CD4-positive, alpha-beta memory T cell (primary cell): ENCODE measurements at regions of chr11 and their contacts with region 1.

Region 1: DNA sequence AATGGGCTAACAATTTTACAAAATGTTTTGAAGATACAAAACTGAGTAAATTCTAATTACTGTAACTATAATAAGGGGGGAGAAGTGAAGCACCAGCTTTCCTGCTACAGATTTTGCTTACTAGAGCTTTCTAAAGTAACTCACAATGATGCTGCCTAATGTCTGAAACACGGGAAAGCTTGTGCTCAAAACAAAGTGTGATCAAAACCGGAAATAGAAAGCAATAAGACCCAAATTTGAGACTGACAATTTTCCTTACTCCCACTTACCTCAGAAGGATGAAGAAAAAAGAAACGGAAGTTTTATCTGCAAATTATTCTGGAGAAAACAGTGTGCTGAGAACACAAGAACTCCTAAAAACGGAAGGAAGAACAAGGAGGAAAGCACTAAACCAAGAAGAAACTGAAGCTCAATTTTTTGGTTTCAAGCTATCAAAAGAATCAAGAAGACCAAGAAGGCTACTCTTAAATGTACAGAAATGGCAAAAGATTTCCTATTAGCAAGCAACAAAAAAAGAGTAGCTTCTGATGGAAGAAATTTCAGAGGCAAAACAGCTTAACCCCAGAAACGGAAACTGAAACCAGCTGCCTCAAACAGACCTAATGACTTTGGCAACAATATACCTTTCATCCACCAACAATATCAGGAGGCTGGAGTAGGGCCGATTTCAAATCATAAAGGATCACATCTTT is 33.4 kb downstream of the AMBRA1 start:
- DNase-seq: peak; percentile 30 to 50 (median 39)
- H3K4me3 ChIP-seq: peak overlapping the region; percentile 67 to 89
- H3K4me3 Mint-ChIP-seq: peak overlapping the region; percentile 78 to 96 (median 92)
- H3K27ac ChIP-seq: peak overlapping the region; percentile 77
- H3K27ac Mint-ChIP-seq: peak overlapping the region; percentile 90 to 99 (median 97)
- H3K4me1 ChIP-seq: peaks cover 59% of the 10 kb centered on the region
- H3K4me1 Mint-ChIP-seq: peaks cover 32 to 80% (median 55%) of the 10 kb centered on the region in 4 donors
- H3K27me3 ChIP-seq: no peaks in the 10 kb centered on the region
- H3K27me3 Mint-ChIP-seq: no peaks in the 10 kb centered on the region

Region 2: GRCh38 chr11:46570790-46571398 is 10.4 kb after region 1 on chr11:
- CTCF ChIA-PET with region 1: interaction called, 4 read pairs
- POLR2A ChIA-PET with region 1: interaction called, 14 read pairs
- intact Hi-C with region 1: no loop called
- DNase-seq: no peak
- H3K4me3 ChIP-seq: no peak overlapping the region
- H3K4me3 Mint-ChIP-seq: no peak overlapping the region
- H3K27ac ChIP-seq: no peak overlapping the region
- H3K27ac Mint-ChIP-seq: peak overlapping the region in 3 of 7 donors; percentile 15 to 23 (median 15)
- H3K4me1 ChIP-seq: peaks cover 9% of the 10 kb centered on the region
- H3K4me1 Mint-ChIP-seq: peaks cover 20 to 31% (median 23%) of the 10 kb centered on the region in 4 donors
- H3K27me3 ChIP-seq: no peaks in the 10 kb centered on the region
- H3K27me3 Mint-ChIP-seq: no peaks in the 10 kb centered on the region

Region 3: GRCh38 chr11:46593550-46594373 is 33.3 kb after region 1 on chr11 and contains the start of gene AMBRA1:
- CTCF ChIA-PET with region 1: interaction called, 3 read pairs
- POLR2A ChIA-PET with region 1: interaction called, 16 read pairs
- intact Hi-C with region 1: loop called (anchors 2 kb)
- DNase-seq: peak; percentile 79 to 86 (median 81)
- H3K4me3 ChIP-seq: peak within 1 kb of the TSS; percentile 78 to 99
- H3K4me3 Mint-ChIP-seq: peak within 1 kb of the TSS; percentile 94 to 99 (median 98)
- H3K27ac ChIP-seq: peak within 1 kb of the TSS; percentile 83
- H3K27ac Mint-ChIP-seq: peak within 1 kb of the TSS; percentile 90 to 97 (median 95)
- H3K4me1 ChIP-seq: peaks cover 47% of the 10 kb centered on the region
- H3K4me1 Mint-ChIP-seq: peaks cover 26 to 47% (median 40%) of the 10 kb centered on the region in 4 donors
- H3K27me3 ChIP-seq: no peaks in the 10 kb centered on the region
- H3K27me3 Mint-ChIP-seq: no peaks in the 10 kb centered on the region
- total RNA-seq, gene AMBRA1: 40.8 to 43.9 TPM